CD8-positive, alpha-beta T cell (primary cell): ENCODE measurements at regions of chr2 and their contacts with region 1.

Region 1: DNA sequence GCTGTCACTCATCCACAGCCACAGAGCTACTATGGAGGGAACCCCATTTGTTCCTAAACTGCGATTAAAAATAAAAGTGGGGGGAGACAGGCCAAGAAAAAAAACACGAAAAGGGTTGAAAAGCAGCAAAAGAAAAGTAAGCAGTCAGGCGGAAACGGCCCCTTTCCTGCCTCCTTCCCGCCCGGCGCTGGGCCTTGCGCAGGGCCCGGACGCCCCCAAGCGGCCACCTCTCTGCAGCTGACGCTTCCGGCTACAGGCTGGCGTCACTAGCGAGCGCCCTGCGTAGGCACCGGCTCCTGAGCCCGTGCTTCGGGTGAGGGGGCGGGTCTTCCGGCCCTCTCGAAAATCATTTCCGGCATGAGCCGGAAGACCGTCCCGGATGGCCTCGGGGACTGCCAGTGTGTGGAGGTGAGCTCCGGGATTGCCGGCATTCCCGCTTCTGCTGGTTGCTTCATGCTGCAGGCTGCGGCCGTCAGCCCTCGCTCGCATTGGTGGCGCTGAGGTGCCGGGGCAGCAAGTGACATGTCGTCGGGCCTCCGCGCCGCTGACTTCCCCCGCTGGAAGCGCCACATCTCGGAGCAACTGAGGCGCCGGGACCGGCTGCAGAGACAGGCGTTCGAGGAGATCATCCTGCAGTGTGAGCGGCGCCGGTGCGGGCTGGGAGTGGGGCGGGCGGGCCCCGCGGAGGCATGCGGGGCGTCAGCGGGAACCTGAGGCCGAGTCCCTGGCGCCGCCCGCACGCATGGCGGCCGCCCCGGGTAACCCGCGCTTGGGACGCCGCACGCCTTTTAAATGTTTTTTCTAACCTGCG is at the start of gene ATG16L1:
- DNase-seq: peak; percentile 89 to 98 (median 95)
- ATAC-seq: peak; percentile 94
- H3K4me3 ChIP-seq: peak within 1 kb of the TSS; percentile 85 to 92
- H3K4me3 Mint-ChIP-seq: peak within 1 kb of the TSS; percentile 90
- H3K27ac ChIP-seq: peak within 1 kb of the TSS; percentile 82 to 97
- H3K27ac Mint-ChIP-seq: peak within 1 kb of the TSS; percentile 96
- H3K4me1 ChIP-seq: peaks cover 59% of the 10 kb centered on the region
- H3K4me1 Mint-ChIP-seq: peaks cover 71% of the 10 kb centered on the region
- H3K27me3 ChIP-seq: no peaks in the 10 kb centered on the region
- H3K27me3 Mint-ChIP-seq: no peaks in the 10 kb centered on the region
- CTCF ChIP-seq: peak; percentile 93
- total RNA-seq, gene ATG16L1: 156 to 164 TPM

Region 2: GRCh38 chr2:232611551-232612218 is 639.8 kb before region 1 on chr2:
- CTCF ChIA-PET with region 1: interaction called, 4 read pairs
- POLR2A ChIA-PET with region 1: no interaction called
- intact Hi-C with region 1: loop called (anchors 1 to 5 kb)
- DNase-seq: peak; percentile 34 to 79 (median 72)
- ATAC-seq: peak; percentile 89
- H3K4me3 ChIP-seq: no peak overlapping the region
- H3K4me3 Mint-ChIP-seq: no peak overlapping the region
- H3K27ac ChIP-seq: no peak overlapping the region
- H3K27ac Mint-ChIP-seq: no peak overlapping the region
- H3K4me1 ChIP-seq: no peaks in the 10 kb centered on the region
- H3K4me1 Mint-ChIP-seq: no peaks in the 10 kb centered on the region
- H3K27me3 ChIP-seq: no peaks in the 10 kb centered on the region
- H3K27me3 Mint-ChIP-seq: peaks cover 3% of the 10 kb centered on the region
- CTCF ChIP-seq: peak; percentile 79

Region 3: DNA sequence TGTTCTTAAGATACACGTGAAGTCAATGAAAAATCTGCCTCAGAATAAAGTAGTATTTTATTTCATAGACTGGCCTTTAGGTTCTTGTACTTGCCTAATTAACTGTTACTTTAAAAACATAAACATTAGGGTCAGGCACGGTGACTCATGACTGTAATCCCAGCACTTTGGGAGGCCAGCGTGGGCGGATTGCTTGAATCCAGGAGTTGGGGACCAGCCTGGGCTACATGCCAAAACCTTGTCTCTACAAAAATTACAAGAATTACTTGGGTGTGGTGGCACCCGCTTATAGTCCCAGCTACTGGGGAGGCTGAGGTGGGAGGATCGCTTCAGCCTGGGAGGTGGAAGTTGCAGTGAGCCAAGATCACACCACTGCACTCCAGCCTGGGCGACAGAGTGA is 397.4 kb before region 1 on chr2:
- CTCF ChIA-PET with region 1: interaction called, 14 read pairs
- POLR2A ChIA-PET with region 1: no interaction called
- intact Hi-C with region 1: loop called (anchors 1 kb)
- DNase-seq: no peak
- ATAC-seq: no peak
- H3K4me3 ChIP-seq: no peak overlapping the region
- H3K4me3 Mint-ChIP-seq: no peak overlapping the region
- H3K27ac ChIP-seq: no peak overlapping the region
- H3K27ac Mint-ChIP-seq: peak overlapping the region; percentile 69
- H3K4me1 ChIP-seq: no peaks in the 10 kb centered on the region
- H3K4me1 Mint-ChIP-seq: no peaks in the 10 kb centered on the region
- H3K27me3 ChIP-seq: no peaks in the 10 kb centered on the region
- H3K27me3 Mint-ChIP-seq: no peaks in the 10 kb centered on the region
- CTCF ChIP-seq: no peak

Region 4: GRCh38 chr2:233165895-233166661 is 85.4 kb before region 1 on chr2:
- CTCF ChIA-PET with region 1: interaction called, 3 read pairs
- POLR2A ChIA-PET with region 1: no interaction called
- intact Hi-C with region 1: loop called in 1 of 2 experiments (anchors 5 kb)
- DNase-seq: peak in 5 of 9 experiments; percentile 6 to 58 (median 47)
- ATAC-seq: peak; percentile 26
- H3K4me3 ChIP-seq: no peak overlapping the region
- H3K4me3 Mint-ChIP-seq: no peak overlapping the region
- H3K27ac ChIP-seq: peak overlapping the region in 1 of 2 experiments; percentile 65
- H3K27ac Mint-ChIP-seq: no peak overlapping the region
- H3K4me1 ChIP-seq: peaks cover 14% of the 10 kb centered on the region
- H3K4me1 Mint-ChIP-seq: peaks cover 7% of the 10 kb centered on the region
- H3K27me3 ChIP-seq: no peaks in the 10 kb centered on the region
- H3K27me3 Mint-ChIP-seq: no peaks in the 10 kb centered on the region
- CTCF ChIP-seq: no peak

Region 5: GRCh38 chr2:233219848-233220247 is 31.7 kb before region 1 on chr2:
- CTCF ChIA-PET with region 1: no interaction called
- POLR2A ChIA-PET with region 1: no interaction called
- intact Hi-C with region 1: no loop called
- DNase-seq: no peak
- ATAC-seq: no peak
- H3K4me3 ChIP-seq: no peak overlapping the region
- H3K4me3 Mint-ChIP-seq: no peak overlapping the region
- H3K27ac ChIP-seq: no peak overlapping the region
- H3K27ac Mint-ChIP-seq: no peak overlapping the region
- H3K4me1 ChIP-seq: no peaks in the 10 kb centered on the region
- H3K4me1 Mint-ChIP-seq: no peaks in the 10 kb centered on the region
- H3K27me3 ChIP-seq: no peaks in the 10 kb centered on the region
- H3K27me3 Mint-ChIP-seq: no peaks in the 10 kb centered on the region
- CTCF ChIP-seq: no peak

Region 6: DNA sequence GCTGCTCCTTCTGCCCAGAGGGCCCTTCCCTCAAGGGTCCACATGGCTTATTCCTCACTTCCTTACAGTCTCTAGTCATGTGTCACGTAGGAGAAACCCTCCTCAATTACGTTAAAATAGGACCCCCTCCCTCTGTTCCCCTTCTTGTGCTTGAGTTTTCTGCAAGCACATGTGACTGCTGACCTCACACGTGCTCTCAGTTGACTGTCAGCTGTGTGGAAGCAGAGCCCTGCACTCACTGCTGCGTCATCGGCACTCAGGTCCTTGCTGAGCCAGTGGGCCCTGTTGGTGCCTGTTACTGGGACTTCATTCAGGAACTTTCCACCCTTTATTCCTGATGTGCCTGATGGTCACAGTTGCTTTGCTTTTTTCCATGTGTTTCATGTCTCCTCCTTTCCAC is 11.1 kb after region 1 on chr2:
- CTCF ChIA-PET with region 1: interaction called, 20 read pairs
- POLR2A ChIA-PET with region 1: interaction called, 35 read pairs
- intact Hi-C with region 1: loop called in 1 of 2 experiments (anchors 1 kb)
- DNase-seq: no peak
- ATAC-seq: no peak
- H3K4me3 ChIP-seq: no peak overlapping the region
- H3K4me3 Mint-ChIP-seq: peak overlapping the region; percentile 11
- H3K27ac ChIP-seq: peak overlapping the region in 1 of 2 experiments; percentile 72
- H3K27ac Mint-ChIP-seq: peak overlapping the region; percentile 90
- H3K4me1 ChIP-seq: peaks cover 27% of the 10 kb centered on the region
- H3K4me1 Mint-ChIP-seq: peaks cover 73% of the 10 kb centered on the region
- H3K27me3 ChIP-seq: no peaks in the 10 kb centered on the region
- H3K27me3 Mint-ChIP-seq: no peaks in the 10 kb centered on the region
- CTCF ChIP-seq: no peak